ENCODE measurements at regions of chr3 and their contacts with region 1.

Region 1: DNA sequence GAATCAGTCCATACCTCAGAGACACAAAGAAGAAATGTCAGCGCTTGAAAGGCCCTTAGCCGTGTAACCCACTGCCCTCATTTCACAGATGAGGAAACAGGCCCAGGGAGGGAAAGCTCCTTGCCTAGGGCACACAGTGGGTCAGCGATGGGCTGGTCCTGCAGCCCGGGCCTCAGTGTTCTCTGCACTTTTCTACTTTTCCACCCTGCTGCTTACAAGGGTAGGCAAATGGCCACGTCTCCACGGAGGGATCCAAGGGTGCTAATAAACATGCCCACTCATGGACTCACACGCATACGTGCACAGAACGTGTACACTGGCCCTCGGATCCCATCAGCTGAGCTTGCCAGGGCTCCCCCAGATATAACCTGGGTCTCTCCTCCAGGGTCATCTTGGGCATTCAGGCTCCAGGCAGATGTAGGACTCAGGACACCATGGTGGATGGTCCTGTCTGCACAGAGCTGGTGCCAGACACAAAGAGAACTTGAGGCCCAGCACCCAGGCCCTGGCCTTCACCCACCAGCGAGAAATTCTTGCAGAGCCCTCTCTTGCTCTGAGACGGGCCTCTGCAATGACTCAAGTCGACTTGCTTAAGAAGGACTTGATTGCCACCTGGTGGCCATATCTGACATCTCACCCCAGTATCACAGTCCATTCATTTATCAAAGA is 34.5 kb upstream of the VPS8 start:
- DNase-seq: peak; percentile 57 to 86
- H3K4me3 ChIP-seq: no peak overlapping the region
- H3K27ac ChIP-seq: no peak overlapping the region
- H3K4me1 ChIP-seq: peaks cover 0 to 7% (median 3%) of the 10 kb centered on the region in 4 experiments; a peak in 3 of 7 replicates
- H3K27me3 ChIP-seq: no peaks in the 10 kb centered on the region; a peak in 1 of 7 replicates
- CTCF ChIP-seq: peak; percentile 18 to 87 (median 77)
- EP300 ChIP-seq: no peak
- POLR2A ChIP-seq: no peak
- RAD21 ChIP-seq: peak; percentile 96 to 97

Region 2: GRCh38 chr3:184549793-184550577 is 227.5 kb before region 1 on chr3:
- CTCF ChIA-PET with region 1: interaction called, 47 read pairs
- POLR2A ChIA-PET with region 1: no interaction called
- DNase-seq: no peak
- H3K4me3 ChIP-seq: no peak overlapping the region
- H3K27ac ChIP-seq: no peak overlapping the region
- H3K4me1 ChIP-seq: no peaks in the 10 kb centered on the region
- H3K27me3 ChIP-seq: no peaks in the 10 kb centered on the region; a peak in 1 of 7 replicates
- CTCF ChIP-seq: no peak
- EP300 ChIP-seq: no peak
- POLR2A ChIP-seq: no peak
- RAD21 ChIP-seq: no peak

Region 3: GRCh38 chr3:184592371-184593219 is 184.9 kb before region 1 on chr3:
- CTCF ChIA-PET with region 1: interaction called, 22 read pairs
- POLR2A ChIA-PET with region 1: no interaction called
- DNase-seq: no peak
- H3K4me3 ChIP-seq: no peak overlapping the region
- H3K27ac ChIP-seq: no peak overlapping the region
- H3K4me1 ChIP-seq: peaks cover 4 to 40% (median 13%) of the 10 kb centered on the region in 4 experiments
- H3K27me3 ChIP-seq: peaks cover 0 to 21% (median 20%) of the 10 kb centered on the region in 4 experiments; a peak in 6 of 7 replicates
- CTCF ChIP-seq: no peak
- EP300 ChIP-seq: no peak
- POLR2A ChIP-seq: no peak
- RAD21 ChIP-seq: no peak

Region 4: GRCh38 chr3:184616432-184616831 is 161.0 kb before region 1 on chr3:
- CTCF ChIA-PET with region 1: interaction called, 13 read pairs
- POLR2A ChIA-PET with region 1: no interaction called
- DNase-seq: no peak
- H3K4me3 ChIP-seq: no peak overlapping the region
- H3K27ac ChIP-seq: no peak overlapping the region
- H3K4me1 ChIP-seq: no peaks in the 10 kb centered on the region; a peak in 1 of 7 replicates
- H3K27me3 ChIP-seq: peaks cover 0 to 3% (median 0%) of the 10 kb centered on the region in 4 experiments; a peak in 2 of 7 replicates
- CTCF ChIP-seq: no peak
- EP300 ChIP-seq: no peak
- POLR2A ChIP-seq: no peak
- RAD21 ChIP-seq: no peak

Region 5: GRCh38 chr3:184734903-184735701 is 42.4 kb before region 1 on chr3:
- CTCF ChIA-PET with region 1: interaction called, 26 read pairs
- POLR2A ChIA-PET with region 1: no interaction called
- DNase-seq: peak in 1 of 2 experiments; percentile 45
- H3K4me3 ChIP-seq: no peak overlapping the region
- H3K27ac ChIP-seq: no peak overlapping the region
- H3K4me1 ChIP-seq: no peaks in the 10 kb centered on the region
- H3K27me3 ChIP-seq: no peaks in the 10 kb centered on the region
- CTCF ChIP-seq: no peak
- EP300 ChIP-seq: no peak
- POLR2A ChIP-seq: no peak
- RAD21 ChIP-seq: no peak

Region 6: DNA sequence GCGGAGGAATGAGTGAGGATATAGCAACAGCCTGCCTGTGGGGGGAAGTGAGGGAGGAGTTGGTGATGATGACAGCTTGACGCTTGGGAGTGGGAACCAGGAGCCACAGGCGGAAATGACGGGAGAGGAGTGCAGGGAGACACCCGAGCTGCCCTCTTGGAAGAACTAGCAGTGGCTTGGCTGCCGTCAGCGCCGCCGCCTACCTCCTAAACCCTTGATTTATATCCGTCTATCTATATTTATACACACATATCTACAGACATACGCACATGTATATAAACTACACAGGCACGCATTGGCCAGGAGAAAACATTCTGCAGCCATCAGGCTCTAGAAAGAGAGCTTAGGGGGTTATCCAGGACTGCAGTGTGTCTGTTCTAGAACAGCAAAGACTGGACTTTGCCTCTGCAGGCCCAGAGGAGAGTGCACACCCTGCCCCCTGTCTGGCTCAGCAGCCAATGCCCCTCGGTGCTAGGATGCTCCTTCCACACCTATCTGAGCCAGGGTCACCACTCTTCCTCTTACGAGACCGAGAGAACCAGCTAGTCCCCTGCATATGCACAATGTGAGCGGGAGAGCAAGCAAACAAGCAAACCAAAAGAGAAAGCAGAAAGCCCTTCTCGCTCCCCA is 20.3 kb before region 1 on chr3:
- CTCF ChIA-PET with region 1: interaction called, 56 read pairs
- POLR2A ChIA-PET with region 1: interaction called, 3 read pairs
- DNase-seq: no peak
- H3K4me3 ChIP-seq: no peak overlapping the region
- H3K27ac ChIP-seq: no peak overlapping the region
- H3K4me1 ChIP-seq: peaks cover 3 to 29% (median 19%) of the 10 kb centered on the region in 4 experiments
- H3K27me3 ChIP-seq: 0 out of 7 replicates have a peak, but pooled peaks cover 0 to 3% (median 1%) of the 10 kb centered on the region in 4 experiments
- CTCF ChIP-seq: peak in 1 of 3 experiments; percentile 7; a peak in 1 of 4 replicates
- EP300 ChIP-seq: no peak
- POLR2A ChIP-seq: no peak
- RAD21 ChIP-seq: no peak

Region 7: GRCh38 chr3:184808021-184808420 is 30.6 kb after region 1 on chr3:
- CTCF ChIA-PET with region 1: interaction called, 39 read pairs
- POLR2A ChIA-PET with region 1: no interaction called
- DNase-seq: peak; percentile 38 to 67
- H3K4me3 ChIP-seq: no peak overlapping the region
- H3K27ac ChIP-seq: no peak overlapping the region
- H3K4me1 ChIP-seq: peaks cover 0 to 5% (median 2%) of the 10 kb centered on the region in 4 experiments; a peak in 3 of 7 replicates
- H3K27me3 ChIP-seq: no peaks in the 10 kb centered on the region; a peak in 1 of 7 replicates
- CTCF ChIP-seq: peak; percentile 72 to 80 (median 80)
- EP300 ChIP-seq: no peak
- POLR2A ChIP-seq: no peak
- RAD21 ChIP-seq: peak; percentile 38 to 51; a peak in 3 of 4 replicates

Measured in H1 (cell line).